Heart right ventricle (tissue), 16 donors: ENCODE measurements at regions of chr10 and their contacts with region 1.

Region 1: GRCh38 chr10:101228153-101228973 is 900 bp downstream of the LBX1 start:
- DNase-seq: no peak
- ATAC-seq: peak in 2 of 8 donors; percentile 18 to 39
- H3K4me3 ChIP-seq: peak overlapping the region in 2 of 10 donors; percentile 31 to 35
- H3K27ac ChIP-seq: no peak overlapping the region
- H3K4me1 ChIP-seq: peaks cover 18 to 67% (median 56%) of the 10 kb centered on the region in 9 donors
- H3K27me3 ChIP-seq: peaks cover 91 to 100% (median 100%) of the 10 kb centered on the region in 7 donors
- CTCF ChIP-seq: no peak

Region 2: GRCh38 chr10:101161494-101162299 is 66.7 kb before region 1 on chr10:
- intact Hi-C with region 1: loop called in 1 of 10 experiments (anchors 2 kb)
- DNase-seq: peak; percentile 46 to 73
- ATAC-seq: peak; percentile 85 to 94 (median 90)
- H3K4me3 ChIP-seq: peak overlapping the region in 8 of 10 donors; percentile 11 to 47 (median 30)
- H3K27ac ChIP-seq: no peak overlapping the region
- H3K4me1 ChIP-seq: peaks cover 0 to 9% (median 4%) of the 10 kb centered on the region in 9 donors
- H3K27me3 ChIP-seq: peaks cover 0 to 96% (median 75%) of the 10 kb centered on the region in 7 donors
- CTCF ChIP-seq: peak; percentile 93 to 98 (median 97)

Region 3: GRCh38 chr10:101441541-101442455 is 213.4 kb after region 1 on chr10:
- intact Hi-C with region 1: no loop called
- DNase-seq: peak in 1 of 2 donors; percentile 17
- ATAC-seq: peak; percentile 82 to 93 (median 84)
- H3K4me3 ChIP-seq: no peak overlapping the region
- H3K27ac ChIP-seq: no peak overlapping the region
- H3K4me1 ChIP-seq: peaks cover 0 to 34% (median 16%) of the 10 kb centered on the region in 9 donors
- H3K27me3 ChIP-seq: no peaks in the 10 kb centered on the region
- CTCF ChIP-seq: peak in 8 of 9 donors; percentile 29 to 68 (median 62)